GM12878 (cell line): ENCODE measurements at regions of chr2 and their contacts with region 1.

Region 1: GRCh38 chr2:10091182-10091888 is 11.1 kb upstream of the CYS1 start:
- DNase-seq: no peak
- ATAC-seq: peak; percentile 71
- H3K4me3 ChIP-seq: no peak overlapping the region; the same call in 1 of the 2 replicates
- H3K27ac ChIP-seq: no peak overlapping the region
- H3K4me1 ChIP-seq: peaks cover 18% of the 10 kb centered on the region
- H3K27me3 ChIP-seq: no peaks in the 10 kb centered on the region
- CTCF ChIP-seq: peak in 1 of 3 experiments; percentile 29; a peak in 1 of 6 replicates
- EP300 ChIP-seq: no peak
- POLR2A ChIP-seq: no peak
- RAD21 ChIP-seq: no peak

Region 2: GRCh38 chr2:10079234-10079869 is 12.0 kb before region 1 on chr2:
- CTCF ChIA-PET with region 1: interaction called, 983 read pairs
- POLR2A ChIA-PET with region 1: interaction called, 73 read pairs
- RAD21 ChIA-PET with region 1: interaction called, 216 read pairs
- SMC1A ChIA-PET with region 1: interaction called, 236 read pairs
- in situ Hi-C with region 1: no loop called
- intact Hi-C with region 1: loop called (anchors 1 kb)
- DNase-seq: no peak
- ATAC-seq: peak; percentile 28
- H3K4me3 ChIP-seq: peak overlapping the region; percentile 57
- H3K27ac ChIP-seq: peak overlapping the region; percentile 40; the same call in 1 of the 2 replicates
- H3K4me1 ChIP-seq: peaks cover 50% of the 10 kb centered on the region
- H3K27me3 ChIP-seq: no peaks in the 10 kb centered on the region
- CTCF ChIP-seq: no peak
- EP300 ChIP-seq: no peak
- POLR2A ChIP-seq: no peak
- RAD21 ChIP-seq: no peak

Region 3: DNA sequence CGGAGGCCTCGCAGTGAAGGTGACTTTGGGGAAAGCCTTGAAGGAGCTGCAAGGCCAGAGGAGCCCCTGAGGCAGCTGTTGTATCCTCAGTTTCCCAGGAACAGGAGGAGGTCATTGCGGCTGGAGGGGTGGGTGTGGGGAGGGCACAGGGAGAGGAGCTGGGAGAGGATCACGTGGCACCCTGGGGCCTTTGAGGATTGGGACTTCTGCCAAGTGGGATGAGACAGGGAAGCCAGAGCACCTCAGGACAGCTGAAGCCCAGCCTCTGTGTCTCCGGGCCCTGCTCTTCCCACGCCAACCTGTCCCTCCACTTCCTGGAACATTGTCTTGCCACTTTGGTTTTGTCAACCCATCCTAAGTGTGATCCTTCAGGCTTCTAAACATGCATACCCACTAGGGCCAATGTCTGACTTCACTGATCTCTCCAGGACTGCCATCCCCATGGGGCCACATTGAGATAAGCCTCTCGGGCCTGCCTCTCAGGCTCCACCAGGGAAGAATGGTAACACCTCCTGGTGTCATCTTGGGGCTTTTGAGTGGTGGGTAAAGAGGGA is 11.9 kb after region 1 on chr2:
- CTCF ChIA-PET with region 1: interaction called, 983 read pairs
- POLR2A ChIA-PET with region 1: interaction called, 5 read pairs
- RAD21 ChIA-PET with region 1: interaction called, 13 read pairs
- SMC1A ChIA-PET with region 1: interaction called, 24 read pairs
- in situ Hi-C with region 1: no loop called
- intact Hi-C with region 1: no loop called
- DNase-seq: no peak
- ATAC-seq: no peak
- H3K4me3 ChIP-seq: no peak overlapping the region
- H3K27ac ChIP-seq: no peak overlapping the region
- H3K4me1 ChIP-seq: peaks cover 2% of the 10 kb centered on the region; the same call in 1 of the 2 replicates
- H3K27me3 ChIP-seq: no peaks in the 10 kb centered on the region
- CTCF ChIP-seq: no peak
- EP300 ChIP-seq: no peak
- POLR2A ChIP-seq: no peak
- RAD21 ChIP-seq: no peak

Region 4: GRCh38 chr2:10193851-10194820 is 102.8 kb after region 1 on chr2:
- CTCF ChIA-PET with region 1: no interaction called
- POLR2A ChIA-PET with region 1: no interaction called
- RAD21 ChIA-PET with region 1: no interaction called
- SMC1A ChIA-PET with region 1: no interaction called
- in situ Hi-C with region 1: no loop called
- intact Hi-C with region 1: no loop called
- DNase-seq: no peak
- ATAC-seq: no peak
- H3K4me3 ChIP-seq: no peak overlapping the region
- H3K27ac ChIP-seq: no peak overlapping the region
- H3K4me1 ChIP-seq: no peaks in the 10 kb centered on the region
- H3K27me3 ChIP-seq: no peaks in the 10 kb centered on the region
- CTCF ChIP-seq: no peak
- EP300 ChIP-seq: no peak
- POLR2A ChIP-seq: no peak
- RAD21 ChIP-seq: no peak

Region 5: DNA sequence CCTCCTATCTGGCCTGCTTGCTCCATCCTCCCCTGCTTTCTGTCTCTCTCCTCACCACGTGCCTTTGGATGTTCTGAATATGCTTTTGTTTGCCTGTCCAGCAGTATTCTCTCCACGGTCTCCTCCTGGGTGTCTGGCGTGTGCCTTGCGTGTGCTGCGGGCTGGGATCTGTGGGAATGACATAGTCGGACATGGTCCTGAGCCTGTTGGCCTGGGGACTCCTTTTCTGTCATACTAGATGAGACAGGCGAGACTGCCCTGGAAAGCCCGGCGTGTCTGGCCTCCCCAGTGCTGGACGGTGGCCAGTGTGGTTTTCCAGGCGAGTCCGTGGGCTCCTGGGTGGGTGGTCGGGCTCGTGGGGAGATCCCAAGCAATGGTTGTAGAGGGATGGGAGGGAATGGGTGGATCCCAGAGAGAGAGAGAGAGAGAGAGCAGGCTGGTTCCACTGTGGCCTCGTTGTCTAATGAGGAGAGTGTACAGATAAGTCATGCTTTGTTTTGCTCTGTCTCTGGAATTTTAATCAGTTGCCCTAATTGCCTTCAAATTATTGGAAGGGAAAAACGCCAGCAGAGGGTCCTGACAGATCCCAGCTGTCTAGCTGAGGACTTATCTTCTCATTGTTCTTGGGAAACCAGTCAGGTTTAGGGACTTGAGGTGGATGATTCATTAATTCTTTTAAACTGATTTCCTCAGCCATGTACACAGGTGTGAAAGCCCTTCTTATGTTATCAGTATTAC is 269.7 kb after region 1 on chr2:
- CTCF ChIA-PET with region 1: no interaction called
- POLR2A ChIA-PET with region 1: no interaction called
- RAD21 ChIA-PET with region 1: no interaction called
- SMC1A ChIA-PET with region 1: no interaction called
- in situ Hi-C with region 1: no loop called
- intact Hi-C with region 1: no loop called
- DNase-seq: no peak
- ATAC-seq: no peak
- H3K4me3 ChIP-seq: no peak overlapping the region
- H3K27ac ChIP-seq: no peak overlapping the region
- H3K4me1 ChIP-seq: no peaks in the 10 kb centered on the region
- H3K27me3 ChIP-seq: no peaks in the 10 kb centered on the region
- CTCF ChIP-seq: no peak
- EP300 ChIP-seq: no peak
- POLR2A ChIP-seq: no peak
- RAD21 ChIP-seq: no peak